ENCODE measurements at regions of chr4 and their contacts with region 1.

Region 1: DNA sequence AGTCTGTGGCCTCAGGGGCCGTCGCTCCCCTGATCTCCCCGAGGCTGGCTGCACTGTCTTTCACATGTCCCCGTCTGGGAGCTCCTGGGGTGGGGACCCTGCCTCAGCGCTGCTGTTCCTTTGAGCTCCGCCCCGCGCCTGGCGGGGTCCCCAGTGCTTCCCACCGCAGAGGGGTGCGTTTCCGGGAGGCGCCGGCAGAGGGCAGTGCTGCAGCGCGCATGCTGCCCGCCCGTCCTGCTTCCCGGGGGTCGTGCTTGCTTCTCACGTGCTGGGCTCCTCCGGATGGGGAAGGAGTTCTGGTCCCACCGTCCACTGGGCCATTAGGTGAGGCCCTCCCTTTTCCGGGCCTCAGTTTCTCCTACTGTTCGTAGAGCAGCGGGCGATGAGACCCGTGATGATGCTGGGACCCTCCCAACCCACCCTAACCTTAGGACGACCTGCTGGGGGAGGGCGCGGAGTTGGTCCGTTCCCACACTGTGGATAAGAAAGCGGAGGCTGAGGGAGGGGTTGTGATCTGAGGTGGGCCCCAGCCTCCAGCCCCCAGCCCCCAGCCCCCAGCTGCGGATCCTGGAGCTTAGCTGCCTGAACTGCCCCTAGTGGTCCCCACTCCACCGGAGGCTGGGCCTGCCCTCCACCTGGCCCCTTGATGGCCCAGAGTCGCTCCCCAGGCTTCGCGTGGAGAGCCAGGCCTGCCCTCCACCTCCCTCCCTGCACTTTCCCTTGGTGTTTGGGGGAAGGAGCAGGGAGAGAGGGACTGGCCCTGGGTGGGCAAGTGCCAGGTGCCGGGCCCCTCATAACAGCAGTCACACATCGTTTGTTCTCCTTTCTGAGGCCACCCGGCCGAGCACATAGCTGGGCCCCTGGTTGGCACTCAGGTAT is 15.3 kb downstream of the CPZ start:
- DNase-seq: no peak
- ATAC-seq: no peak
- H3K4me3 ChIP-seq: no peak overlapping the region
- H3K27ac ChIP-seq: no peak overlapping the region
- H3K4me1 ChIP-seq: no peaks in the 10 kb centered on the region
- H3K27me3 ChIP-seq: no peaks in the 10 kb centered on the region
- CTCF ChIP-seq: peak; percentile 58 to 88 (median 75)
- POLR2A ChIP-seq: no peak

Region 2: DNA sequence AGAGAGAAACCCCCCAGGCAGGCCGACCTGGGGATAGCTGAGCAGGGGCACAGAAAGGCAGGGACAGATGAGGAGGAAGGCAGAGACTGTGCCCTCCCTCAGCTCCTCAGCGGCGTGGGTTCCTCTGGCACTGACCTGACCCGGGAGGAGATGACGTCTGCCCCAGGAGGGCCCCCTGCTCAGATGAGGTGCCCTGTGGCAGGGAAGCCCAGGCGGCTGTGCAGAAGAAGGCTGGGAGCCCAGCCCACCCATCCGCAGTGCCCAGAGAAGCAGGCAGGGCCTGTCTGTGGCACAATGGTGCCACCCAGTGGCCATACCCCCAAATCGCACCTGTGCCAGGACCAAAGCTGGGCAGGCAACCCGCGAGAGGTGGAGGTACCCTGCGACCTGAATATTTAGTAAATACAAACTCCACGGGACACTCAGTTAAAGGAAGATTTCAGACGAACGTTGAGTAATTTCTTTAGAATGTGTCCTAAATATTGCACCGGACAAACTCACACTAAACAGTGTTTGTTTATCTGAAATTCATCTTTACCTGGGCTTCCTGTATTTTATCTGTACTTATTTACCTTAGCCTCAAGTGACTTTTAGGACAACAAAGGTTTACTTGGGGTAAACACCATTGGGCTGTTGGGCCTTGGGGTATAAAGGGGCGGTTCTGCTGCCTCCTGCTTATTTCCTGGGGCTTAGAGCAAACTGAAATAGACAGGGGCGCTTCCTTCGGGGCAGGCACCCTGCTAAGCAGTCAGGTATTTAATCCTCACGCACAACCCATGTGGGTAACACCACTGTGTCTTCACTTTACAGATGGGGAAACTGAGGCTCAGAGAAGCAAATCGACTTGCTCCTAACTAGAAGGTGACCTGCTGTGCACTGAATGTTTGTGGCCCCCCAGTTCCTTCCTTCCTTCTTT is 310.3 kb after region 1 on chr4:
- in situ Hi-C with region 1: no loop called
- intact Hi-C with region 1: loop called (anchors 10 kb)
- DNase-seq: no peak
- ATAC-seq: peak in 1 of 2 donors; percentile 49
- H3K4me3 ChIP-seq: no peak overlapping the region
- H3K27ac ChIP-seq: no peak overlapping the region
- H3K4me1 ChIP-seq: no peaks in the 10 kb centered on the region
- H3K27me3 ChIP-seq: no peaks in the 10 kb centered on the region
- CTCF ChIP-seq: peak; percentile 21 to 72 (median 58)
- POLR2A ChIP-seq: no peak

Measured in gastrocnemius medialis (tissue), 4 donors.